Naive thymus-derived CD4-positive, alpha-beta T cell (primary cell): ENCODE measurements at regions of chr14 and their contacts with region 1.

Region 1: DNA sequence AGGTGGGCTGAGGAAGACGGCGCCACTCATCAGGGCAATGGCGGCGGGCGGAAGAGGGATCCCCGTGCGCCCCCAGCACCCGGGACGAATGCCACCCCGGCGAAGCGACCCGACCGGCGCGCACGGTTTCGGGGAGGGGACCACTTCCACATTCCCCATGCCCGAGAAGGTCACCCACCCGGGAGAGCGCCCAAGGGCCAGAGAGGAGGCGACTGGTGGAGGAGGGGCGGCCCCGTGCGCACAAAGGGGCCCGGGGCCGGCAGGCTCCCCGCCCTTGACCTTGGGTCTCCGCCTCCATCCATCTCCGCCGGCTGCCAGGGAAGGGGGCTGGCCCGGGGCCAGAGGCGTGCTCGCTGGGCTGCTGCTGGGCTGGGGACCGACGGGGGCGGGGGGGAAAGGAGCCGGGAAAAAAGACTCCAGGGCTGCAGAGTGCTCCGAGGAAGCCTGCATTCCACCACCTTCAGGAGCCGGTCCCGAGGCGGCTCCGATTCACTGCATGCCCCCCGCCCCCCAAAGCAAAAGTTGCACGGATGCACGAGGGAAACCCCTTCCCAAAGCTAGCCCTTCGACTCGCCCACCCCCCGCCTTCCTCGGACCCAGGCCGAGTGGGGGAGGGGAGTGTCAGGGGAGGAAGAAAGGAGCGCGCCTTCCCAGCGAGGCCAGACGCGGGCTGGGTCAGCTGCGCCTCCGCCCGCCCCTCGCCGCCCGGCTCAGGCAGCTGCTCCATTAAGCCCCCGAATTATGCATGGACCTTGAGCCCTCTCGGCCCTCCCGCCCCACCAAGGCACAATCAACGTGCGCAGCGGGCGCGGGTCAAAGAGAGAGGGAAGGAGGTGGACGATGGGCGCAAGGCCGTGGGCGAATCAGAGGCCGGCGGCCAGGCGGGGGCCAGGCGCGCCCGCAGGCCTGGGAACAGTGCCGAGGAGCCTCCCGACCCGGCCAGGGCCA is 26.2 kb downstream of the BCL11B start:
- DNase-seq: peak in 2 of 9 donors; percentile 47 to 61
- ATAC-seq: no peak
- H3K4me3 ChIP-seq: peak overlapping the region; percentile 61
- H3K4me3 Mint-ChIP-seq: peak overlapping the region; percentile 81 to 95 (median 90)
- H3K27ac ChIP-seq: peak overlapping the region; percentile 98
- H3K27ac Mint-ChIP-seq: peak overlapping the region; percentile 96 to 100 (median 99)
- H3K4me1 ChIP-seq: peaks cover 74 to 81% of the 10 kb centered on the region in 2 donors
- H3K4me1 Mint-ChIP-seq: peaks cover 48 to 90% (median 84%) of the 10 kb centered on the region in 7 donors
- H3K27me3 ChIP-seq: no peaks in the 10 kb centered on the region
- H3K27me3 Mint-ChIP-seq: peaks cover 0 to 4% (median 0%) of the 10 kb centered on the region in 5 donors

Region 2: DNA sequence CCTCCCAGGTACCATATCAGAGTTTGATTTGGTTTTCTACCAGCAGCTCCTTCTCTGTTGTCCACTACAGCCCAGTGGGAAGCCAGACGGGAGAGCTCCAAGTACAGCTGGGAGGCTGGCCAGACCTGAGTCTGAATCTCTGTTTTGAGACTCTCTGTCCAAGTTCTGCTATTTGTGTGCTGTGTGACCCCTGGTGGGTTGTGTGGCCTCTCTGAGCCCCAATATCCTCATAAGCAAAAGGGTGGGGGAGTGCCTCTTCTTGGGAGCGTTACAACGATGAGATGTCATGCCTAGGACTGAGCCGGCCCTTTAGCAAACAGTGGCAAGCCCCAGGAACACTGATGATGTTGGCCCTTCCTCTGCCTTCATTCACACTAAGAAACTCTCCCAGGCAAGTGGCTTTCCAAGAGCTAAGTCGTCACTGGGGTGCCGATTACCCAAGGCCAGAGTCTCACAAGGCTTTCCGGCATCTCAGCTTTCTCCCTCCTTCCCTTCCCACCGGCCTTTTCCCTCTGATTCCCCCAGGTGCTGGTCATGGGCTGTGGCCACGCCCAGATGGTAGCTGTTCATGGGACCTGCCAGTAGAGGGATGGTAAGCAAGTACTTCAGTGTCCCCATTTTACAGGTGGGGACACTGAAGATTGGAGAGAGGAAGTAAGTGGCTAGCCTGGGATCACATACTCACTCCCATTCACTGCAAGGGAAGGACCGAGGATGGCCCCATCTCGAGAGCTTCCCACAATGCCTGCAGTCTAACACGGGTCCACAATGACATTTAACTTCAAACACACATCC is 21.5 kb before region 1 on chr14:
- CTCF ChIA-PET with region 1: interaction called, 7 read pairs
- POLR2A ChIA-PET with region 1: interaction called, 2,458 read pairs
- intact Hi-C with region 1: loop called in 1 of 2 experiments (anchors 2 kb)
- DNase-seq: peak in 1 of 9 donors; percentile 17
- ATAC-seq: no peak
- H3K4me3 ChIP-seq: peak overlapping the region; percentile 34
- H3K4me3 Mint-ChIP-seq: peak overlapping the region; percentile 39 to 94 (median 78)
- H3K27ac ChIP-seq: peak overlapping the region; percentile 98
- H3K27ac Mint-ChIP-seq: peak overlapping the region; percentile 88 to 100 (median 99)
- H3K4me1 ChIP-seq: peaks cover 86 to 97% of the 10 kb centered on the region in 2 donors
- H3K4me1 Mint-ChIP-seq: peaks cover 74 to 99% (median 96%) of the 10 kb centered on the region in 7 donors
- H3K27me3 ChIP-seq: no peaks in the 10 kb centered on the region
- H3K27me3 Mint-ChIP-seq: no peaks in the 10 kb centered on the region

Region 3: GRCh38 chr14:99230208-99231151 is 15.4 kb before region 1 on chr14:
- CTCF ChIA-PET with region 1: interaction called, 10 read pairs
- POLR2A ChIA-PET with region 1: interaction called, 2,458 read pairs
- intact Hi-C with region 1: loop called (anchors 1 kb)
- DNase-seq: peak; percentile 54 to 91 (median 84)
- ATAC-seq: peak; percentile 82
- H3K4me3 ChIP-seq: peak overlapping the region; percentile 27
- H3K4me3 Mint-ChIP-seq: peak overlapping the region; percentile 79 to 94 (median 86)
- H3K27ac ChIP-seq: peak overlapping the region; percentile 98
- H3K27ac Mint-ChIP-seq: peak overlapping the region; percentile 94 to 100 (median 99)
- H3K4me1 ChIP-seq: peaks cover 94 to 96% of the 10 kb centered on the region in 2 donors
- H3K4me1 Mint-ChIP-seq: peaks cover 65 to 96% (median 92%) of the 10 kb centered on the region in 7 donors
- H3K27me3 ChIP-seq: no peaks in the 10 kb centered on the region
- H3K27me3 Mint-ChIP-seq: no peaks in the 10 kb centered on the region

Region 4: GRCh38 chr14:99258876-99259726 is 13.3 kb after region 1 on chr14:
- CTCF ChIA-PET with region 1: interaction called, 9 read pairs
- POLR2A ChIA-PET with region 1: interaction called, 2,458 read pairs
- intact Hi-C with region 1: loop called (anchors 1 kb)
- DNase-seq: peak in 8 of 9 donors; percentile 20 to 92 (median 86)
- ATAC-seq: peak; percentile 69
- H3K4me3 ChIP-seq: peak overlapping the region; percentile 56
- H3K4me3 Mint-ChIP-seq: peak overlapping the region; percentile 92 to 100 (median 96)
- H3K27ac ChIP-seq: peak overlapping the region; percentile 98
- H3K27ac Mint-ChIP-seq: peak overlapping the region; percentile 99 to 100 (median 100)
- H3K4me1 ChIP-seq: peaks cover 89 to 92% of the 10 kb centered on the region in 2 donors
- H3K4me1 Mint-ChIP-seq: peaks cover 66 to 99% (median 95%) of the 10 kb centered on the region in 7 donors
- H3K27me3 ChIP-seq: no peaks in the 10 kb centered on the region
- H3K27me3 Mint-ChIP-seq: no peaks in the 10 kb centered on the region